SK-N-SH (cell line): ENCODE measurements at regions of chr4 and their contacts with region 1.

Region 1: GRCh38 chr4:158259955-158260575 is 49.8 kb downstream of the TMEM144 start:
- DNase-seq: no peak
- H3K4me3 ChIP-seq: no peak overlapping the region
- H3K27ac ChIP-seq: no peak overlapping the region
- H3K4me1 ChIP-seq: no peaks in the 10 kb centered on the region; a peak in 1 of 4 replicates
- H3K27me3 ChIP-seq: no peaks in the 10 kb centered on the region
- CTCF ChIP-seq: peak; percentile 68
- EP300 ChIP-seq: no peak
- RAD21 ChIP-seq: peak; percentile 74

Region 2: GRCh38 chr4:158074851-158075250 is 185.2 kb before region 1 on chr4:
- CTCF ChIA-PET with region 1: no interaction called
- POLR2A ChIA-PET with region 1: no interaction called
- DNase-seq: no peak
- H3K4me3 ChIP-seq: no peak overlapping the region
- H3K27ac ChIP-seq: no peak overlapping the region
- H3K4me1 ChIP-seq: no peaks in the 10 kb centered on the region
- H3K27me3 ChIP-seq: no peaks in the 10 kb centered on the region
- CTCF ChIP-seq: no peak
- EP300 ChIP-seq: no peak
- RAD21 ChIP-seq: no peak

Region 3: DNA sequence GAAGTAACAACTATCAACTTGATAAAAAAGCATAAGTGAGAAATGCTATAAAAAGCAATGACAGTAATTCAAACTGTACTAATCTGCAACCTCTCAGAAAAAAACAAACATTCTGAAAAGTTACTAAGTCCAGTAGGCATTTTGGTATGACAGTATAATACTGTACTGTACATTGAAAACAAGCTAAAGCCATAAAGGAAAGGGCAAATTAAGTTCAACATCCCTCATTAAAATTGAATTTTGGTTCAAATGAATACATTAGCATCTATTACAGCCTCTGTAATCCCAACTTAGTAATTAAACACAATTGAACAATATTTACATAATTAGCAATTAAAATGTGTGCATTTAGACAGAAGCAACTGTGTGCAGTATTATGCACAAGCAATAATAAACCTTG is 357.9 kb after region 1 on chr4:
- CTCF ChIA-PET with region 1: interaction called, 12 read pairs
- POLR2A ChIA-PET with region 1: no interaction called
- DNase-seq: no peak
- H3K4me3 ChIP-seq: no peak overlapping the region
- H3K27ac ChIP-seq: no peak overlapping the region
- H3K4me1 ChIP-seq: no peaks in the 10 kb centered on the region
- H3K27me3 ChIP-seq: no peaks in the 10 kb centered on the region
- CTCF ChIP-seq: no peak
- EP300 ChIP-seq: no peak
- RAD21 ChIP-seq: no peak

Region 4: GRCh38 chr4:158624889-158625478 is 364.9 kb after region 1 on chr4:
- CTCF ChIA-PET with region 1: interaction called, 54 read pairs
- POLR2A ChIA-PET with region 1: no interaction called
- DNase-seq: peak; percentile 32
- H3K4me3 ChIP-seq: no peak overlapping the region
- H3K27ac ChIP-seq: no peak overlapping the region
- H3K4me1 ChIP-seq: no peaks in the 10 kb centered on the region
- H3K27me3 ChIP-seq: no peaks in the 10 kb centered on the region
- CTCF ChIP-seq: peak; percentile 80
- EP300 ChIP-seq: no peak
- RAD21 ChIP-seq: peak; percentile 90